Cardiac septum (tissue), 1 donor: ENCODE measurements at regions of chr5 and their contacts with region 1.

Region 1: GRCh38 chr5:59799668-59800346 is 93.7 kb downstream of the PDE4D start:
- DNase-seq: no peak

Region 2: GRCh38 chr5:59188419-59189225 is 611.2 kb before region 1 on chr5:
- intact Hi-C with region 1: loop called (anchors 10 kb)
- DNase-seq: peak; percentile 83

Region 3: GRCh38 chr5:59390074-59390659 is 409.6 kb before region 1 on chr5:
- intact Hi-C with region 1: loop called (anchors 5 kb)
- DNase-seq: no peak

Region 4: GRCh38 chr5:59506285-59506877 is 293.4 kb before region 1 on chr5:
- intact Hi-C with region 1: loop called (anchors 5 kb)
- DNase-seq: no peak

Region 5: DNA sequence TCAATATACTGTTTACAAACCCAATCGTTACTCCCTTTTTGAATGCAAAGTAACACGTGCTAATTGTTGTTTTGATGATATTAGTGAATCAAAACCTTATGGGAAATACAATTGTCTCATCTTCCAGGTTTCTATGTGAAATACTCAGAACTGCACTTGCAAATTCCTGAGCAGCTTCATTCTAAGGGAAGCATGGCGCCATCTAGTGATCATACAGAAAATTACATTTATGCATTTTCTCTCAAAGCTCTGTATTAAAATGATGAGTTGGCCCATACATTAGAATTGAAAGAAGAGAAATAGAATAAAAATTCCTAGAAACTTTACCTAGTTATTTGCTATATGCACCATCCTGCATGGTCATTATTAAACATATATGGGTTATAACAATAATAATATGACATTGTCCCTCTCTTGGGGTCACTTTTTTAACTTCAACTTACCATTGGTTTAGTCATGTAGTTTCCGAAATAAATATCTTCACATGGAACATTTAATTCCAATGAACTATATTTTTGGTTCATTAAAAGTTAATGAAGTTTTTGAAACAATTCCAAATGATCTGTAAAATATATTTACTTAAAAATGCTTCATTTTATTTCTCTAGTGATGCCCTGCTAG is 126.3 kb before region 1 on chr5:
- intact Hi-C with region 1: loop called (anchors 5 kb)
- DNase-seq: no peak

Region 6: DNA sequence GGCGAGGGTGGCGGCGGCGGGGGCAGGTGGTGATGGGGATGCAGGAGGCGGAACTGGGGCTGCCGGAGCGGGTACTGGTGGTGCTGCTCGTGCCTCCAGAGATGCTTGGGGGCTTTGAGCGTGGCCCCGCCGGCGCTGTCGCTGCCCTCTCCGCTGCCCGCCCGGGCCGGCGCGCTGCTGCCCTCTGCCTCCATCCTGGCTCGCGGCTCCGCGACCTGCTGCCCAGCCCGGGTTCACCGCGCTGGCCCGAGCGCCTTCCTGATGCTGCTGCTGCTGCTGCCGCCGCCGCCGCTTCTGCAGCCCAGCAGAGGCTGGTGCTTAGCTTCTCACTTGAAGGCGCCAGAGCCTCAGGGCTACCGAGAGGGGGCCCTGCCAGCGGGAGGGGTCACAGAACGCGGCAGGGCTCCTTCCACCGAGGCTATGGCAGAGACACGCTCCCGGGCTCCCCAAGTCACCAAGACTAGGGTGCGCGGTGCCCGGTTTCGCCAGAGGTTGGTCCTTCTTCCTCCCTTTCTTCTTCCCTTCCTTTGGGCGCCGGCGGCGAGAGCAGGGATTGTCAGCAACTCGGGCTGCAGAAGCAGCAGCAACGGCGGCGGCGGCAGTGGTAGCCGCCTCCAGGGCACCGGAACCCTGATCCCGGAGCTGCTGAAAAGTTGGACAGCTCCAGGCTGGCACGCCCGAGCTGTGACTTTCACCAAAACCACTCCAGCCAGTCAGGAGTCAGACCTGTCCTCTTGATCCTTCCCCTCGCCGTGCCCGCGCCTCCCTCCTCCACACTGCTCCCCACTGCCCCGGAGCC is 93.8 kb after region 1 on chr5 and contains the start of gene PDE4D:
- intact Hi-C with region 1: no loop called
- DNase-seq: peak; percentile 74
- total RNA-seq, gene PDE4D: 29.3 TPM